Activated naive CD4-positive, alpha-beta T cell treated with anti-CD3 and anti-CD28 coated beads for 36 hours (primary cell): ENCODE measurements at regions of chr7 and their contacts with region 1.

Region 1: DNA sequence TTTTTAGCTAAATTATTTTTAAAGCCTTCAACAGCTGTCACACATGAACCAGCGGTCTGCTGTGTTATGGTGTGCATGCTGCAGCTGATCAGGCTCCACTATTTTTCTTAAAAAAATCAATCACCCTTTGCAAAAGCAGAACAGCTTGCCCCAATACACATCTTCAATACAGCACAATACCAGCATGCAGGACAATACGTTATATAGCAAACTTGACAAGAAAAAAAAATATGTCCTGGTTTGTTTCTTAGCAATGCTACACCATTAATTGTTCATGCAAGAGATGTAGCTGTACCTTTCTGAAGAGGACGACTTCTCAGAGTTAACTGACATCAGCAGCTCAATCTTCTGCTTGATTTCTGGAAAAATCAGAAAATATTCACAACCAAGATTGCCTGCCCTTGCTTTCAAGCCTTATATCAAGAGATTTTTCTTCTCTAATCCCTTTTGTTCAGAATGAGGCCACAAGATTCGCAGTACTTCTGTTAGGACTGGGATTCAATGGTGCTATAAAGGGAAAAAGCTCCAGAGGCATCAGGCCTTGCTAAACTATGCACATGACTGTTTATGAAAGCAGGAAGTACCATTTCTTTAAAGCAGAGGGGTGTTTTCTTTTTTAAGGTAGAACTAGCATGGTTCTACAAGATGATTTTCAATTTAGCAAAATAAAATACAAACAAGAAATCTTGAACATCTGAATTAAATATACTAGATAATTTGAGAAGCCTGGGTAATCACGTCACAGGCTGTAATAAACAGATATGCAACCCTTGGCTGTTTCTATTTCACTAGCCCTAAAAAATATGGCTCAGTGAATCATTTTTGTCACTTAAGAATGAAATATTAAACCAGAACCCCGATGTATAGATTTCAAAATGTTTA is 120.0 kb downstream of the SRPK2 start:
- DNase-seq: peak; percentile 14
- H3K4me3 Mint-ChIP-seq: peak overlapping the region; percentile 72
- H3K27ac Mint-ChIP-seq: peak overlapping the region; percentile 90
- H3K4me1 Mint-ChIP-seq: peaks cover 53% of the 10 kb centered on the region
- H3K27me3 Mint-ChIP-seq: no peaks in the 10 kb centered on the region

Region 2: DNA sequence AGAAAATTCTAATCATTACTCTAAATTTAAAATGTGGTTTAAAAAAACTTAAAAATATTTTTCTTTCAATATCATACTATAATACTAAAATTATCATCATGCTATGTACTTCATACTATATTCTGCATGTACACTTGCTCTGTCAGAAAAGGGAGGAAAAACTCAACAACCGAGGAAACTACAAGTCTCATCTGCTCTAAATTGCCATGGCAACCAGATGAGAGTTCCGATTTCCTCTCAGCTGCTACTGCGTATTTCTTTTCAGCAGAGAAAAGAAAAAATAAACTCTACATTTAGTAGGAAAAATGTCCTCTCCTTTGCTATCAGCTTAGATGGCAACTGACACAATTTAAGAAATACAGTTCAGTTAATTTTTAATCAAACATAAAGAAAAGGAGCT is 58.9 kb before region 1 on chr7:
- CTCF ChIA-PET with region 1: no interaction called
- intact Hi-C with region 1: loop called (anchors 1 kb)
- DNase-seq: peak; percentile 28
- H3K4me3 Mint-ChIP-seq: no peak overlapping the region
- H3K27ac Mint-ChIP-seq: no peak overlapping the region
- H3K4me1 Mint-ChIP-seq: peaks cover 65% of the 10 kb centered on the region
- H3K27me3 Mint-ChIP-seq: no peaks in the 10 kb centered on the region

Region 3: DNA sequence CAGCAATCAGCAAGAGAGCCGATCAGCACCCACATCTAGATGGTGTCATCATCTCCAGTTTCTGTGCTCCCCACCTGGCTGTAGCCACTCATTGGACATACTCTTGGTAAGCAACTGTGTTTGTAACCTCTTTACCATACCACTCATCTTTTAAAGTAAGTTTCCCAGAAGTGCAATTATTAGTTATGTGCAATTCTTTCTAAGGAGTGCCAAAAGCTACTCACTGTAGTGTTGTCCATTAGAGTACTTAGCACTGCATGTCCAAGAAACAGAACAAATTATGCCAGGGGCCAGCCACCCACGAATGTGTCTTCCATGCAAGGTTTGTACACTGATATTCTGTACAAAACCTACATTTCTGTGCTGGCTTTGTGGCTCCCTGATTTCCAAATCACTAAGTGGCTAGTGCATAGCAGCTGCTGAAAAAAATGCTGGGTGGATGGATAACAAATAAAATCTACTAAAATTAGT is 12.0 kb before region 1 on chr7:
- CTCF ChIA-PET with region 1: interaction called, 3 read pairs
- intact Hi-C with region 1: loop called (anchors 1 kb)
- DNase-seq: no peak
- H3K4me3 Mint-ChIP-seq: no peak overlapping the region
- H3K27ac Mint-ChIP-seq: no peak overlapping the region
- H3K4me1 Mint-ChIP-seq: peaks cover 52% of the 10 kb centered on the region
- H3K27me3 Mint-ChIP-seq: no peaks in the 10 kb centered on the region

Region 4: DNA sequence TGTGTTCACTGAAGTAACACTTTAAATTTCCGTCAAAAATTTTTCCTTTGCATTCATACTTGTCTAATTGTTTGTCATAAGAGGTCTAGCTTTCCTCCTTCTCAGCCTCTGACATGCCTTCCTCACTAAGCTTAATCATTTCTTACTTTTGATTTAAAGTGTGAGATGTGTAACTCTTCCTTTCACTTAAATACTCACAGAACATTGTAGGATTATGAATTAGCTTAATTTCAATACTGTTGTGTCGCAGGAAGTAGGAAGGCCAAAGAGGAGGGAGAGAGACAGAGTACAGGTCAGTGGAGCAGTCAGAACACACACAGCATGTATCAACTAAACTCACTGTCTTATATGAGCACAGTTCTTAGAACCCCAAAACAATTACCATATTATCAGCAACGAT is 21.0 kb after region 1 on chr7:
- CTCF ChIA-PET with region 1: no interaction called
- intact Hi-C with region 1: loop called (anchors 1 kb)
- DNase-seq: peak; percentile 40
- H3K4me3 Mint-ChIP-seq: no peak overlapping the region
- H3K27ac Mint-ChIP-seq: peak overlapping the region; percentile 14
- H3K4me1 Mint-ChIP-seq: peaks cover 21% of the 10 kb centered on the region
- H3K27me3 Mint-ChIP-seq: no peaks in the 10 kb centered on the region

Region 5: DNA sequence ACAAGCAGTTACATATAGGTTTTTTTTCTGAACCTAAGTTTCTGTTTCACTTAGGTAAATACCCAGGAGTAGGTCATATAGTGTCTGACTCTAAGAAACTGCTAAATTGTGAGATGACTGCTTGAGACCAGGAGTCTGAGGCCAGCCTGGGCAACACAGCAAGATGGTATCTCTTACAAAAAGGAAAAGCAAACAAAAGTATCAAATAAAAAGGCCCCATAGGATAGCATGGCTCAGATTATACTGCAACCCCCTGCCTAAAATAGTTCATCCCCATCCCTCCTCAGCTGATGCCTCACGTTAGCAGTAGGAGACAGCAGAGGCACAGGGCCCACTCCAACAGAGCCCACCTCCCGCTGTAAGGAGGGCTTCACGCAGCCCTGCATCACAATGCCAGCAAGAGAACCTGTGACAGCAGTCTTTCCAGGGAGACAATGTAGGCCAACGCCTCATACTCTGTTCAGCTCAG is 29.7 kb after region 1 on chr7:
- CTCF ChIA-PET with region 1: interaction called, 3 read pairs
- intact Hi-C with region 1: loop called (anchors 1 kb)
- DNase-seq: peak; percentile 55
- H3K4me3 Mint-ChIP-seq: peak overlapping the region; percentile 33
- H3K27ac Mint-ChIP-seq: peak overlapping the region; percentile 44
- H3K4me1 Mint-ChIP-seq: peaks cover 51% of the 10 kb centered on the region
- H3K27me3 Mint-ChIP-seq: no peaks in the 10 kb centered on the region

Region 6: DNA sequence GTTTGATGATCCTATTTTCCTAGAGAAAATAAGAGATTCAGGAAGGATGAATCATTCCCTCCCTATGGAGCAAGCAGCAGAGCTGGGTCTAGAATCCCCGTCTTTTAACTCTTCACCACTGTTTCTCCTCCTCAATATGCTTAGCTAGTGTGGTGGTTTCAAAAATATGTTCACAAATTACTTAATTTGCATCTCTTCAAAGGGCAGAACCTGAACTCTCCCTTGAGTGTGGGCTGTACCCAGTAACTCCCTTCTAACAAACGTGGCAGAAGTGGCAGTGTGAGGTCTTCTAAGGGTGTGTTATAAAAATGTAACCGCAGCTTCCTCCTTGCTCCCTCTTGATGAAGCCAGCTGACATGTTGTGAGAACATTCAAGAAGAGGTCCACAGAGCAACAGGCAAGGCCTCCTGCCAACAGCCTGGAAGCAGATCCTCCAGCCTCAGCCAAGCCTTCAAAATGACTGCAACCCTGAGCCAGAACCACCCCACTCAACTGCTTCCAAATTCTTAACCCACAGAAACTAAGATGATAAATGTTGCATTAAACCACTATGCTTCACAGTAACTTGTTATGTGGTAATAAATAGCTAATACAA is 83.4 kb after region 1 on chr7:
- CTCF ChIA-PET with region 1: interaction called, 4 read pairs
- intact Hi-C with region 1: loop called (anchors 1 kb)
- DNase-seq: peak; percentile 77
- H3K4me3 Mint-ChIP-seq: no peak overlapping the region
- H3K27ac Mint-ChIP-seq: peak overlapping the region; percentile 85
- H3K4me1 Mint-ChIP-seq: peaks cover 64% of the 10 kb centered on the region
- H3K27me3 Mint-ChIP-seq: no peaks in the 10 kb centered on the region

Region 7: DNA sequence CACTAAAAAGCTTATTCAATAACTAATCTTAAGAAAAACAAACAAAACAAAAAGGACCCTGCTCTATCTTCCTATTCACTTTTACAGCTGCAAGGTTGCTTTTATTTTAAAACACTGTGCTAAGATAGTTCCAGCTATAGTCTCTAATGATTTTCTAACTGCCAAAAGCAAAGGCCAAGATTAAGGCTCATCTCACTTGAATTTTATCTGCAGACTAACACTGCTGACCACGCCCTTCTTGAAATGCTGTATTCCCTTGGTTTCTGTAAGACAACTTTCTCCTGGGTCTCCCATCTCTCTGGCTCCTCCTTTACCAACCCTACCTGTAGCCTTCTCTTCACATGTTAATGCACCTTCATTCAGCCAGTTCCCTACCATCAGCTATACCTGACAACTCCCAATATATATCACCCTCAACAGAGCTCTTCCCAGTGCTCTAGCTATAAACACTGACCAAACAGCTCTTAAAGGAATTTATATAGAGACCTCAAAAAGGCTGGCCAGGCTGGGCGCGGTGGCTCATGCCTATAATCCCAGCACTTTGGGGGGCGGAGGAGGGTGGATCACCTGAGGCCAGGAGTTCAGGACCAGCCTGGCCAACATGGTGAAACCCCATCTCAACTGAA is 108.3 kb after region 1 on chr7:
- CTCF ChIA-PET with region 1: no interaction called
- intact Hi-C with region 1: no loop called
- DNase-seq: no peak
- H3K4me3 Mint-ChIP-seq: no peak overlapping the region
- H3K27ac Mint-ChIP-seq: no peak overlapping the region
- H3K4me1 Mint-ChIP-seq: peaks cover 32% of the 10 kb centered on the region
- H3K27me3 Mint-ChIP-seq: no peaks in the 10 kb centered on the region